ENCODE measurements at regions of chr6 and their contacts with region 1.

Region 1: GRCh38 chr6:168150551-168151320 is 71.7 kb upstream of the FRMD1 start:
- DNase-seq: no peak

Region 2: GRCh38 chr6:168355716-168356449 is 205.1 kb after region 1 on chr6:
- intact Hi-C with region 1: loop called (anchors 5 kb)
- DNase-seq: no peak